ENCODE measurements at regions of chr10 and their contacts with region 1.

Region 1: DNA sequence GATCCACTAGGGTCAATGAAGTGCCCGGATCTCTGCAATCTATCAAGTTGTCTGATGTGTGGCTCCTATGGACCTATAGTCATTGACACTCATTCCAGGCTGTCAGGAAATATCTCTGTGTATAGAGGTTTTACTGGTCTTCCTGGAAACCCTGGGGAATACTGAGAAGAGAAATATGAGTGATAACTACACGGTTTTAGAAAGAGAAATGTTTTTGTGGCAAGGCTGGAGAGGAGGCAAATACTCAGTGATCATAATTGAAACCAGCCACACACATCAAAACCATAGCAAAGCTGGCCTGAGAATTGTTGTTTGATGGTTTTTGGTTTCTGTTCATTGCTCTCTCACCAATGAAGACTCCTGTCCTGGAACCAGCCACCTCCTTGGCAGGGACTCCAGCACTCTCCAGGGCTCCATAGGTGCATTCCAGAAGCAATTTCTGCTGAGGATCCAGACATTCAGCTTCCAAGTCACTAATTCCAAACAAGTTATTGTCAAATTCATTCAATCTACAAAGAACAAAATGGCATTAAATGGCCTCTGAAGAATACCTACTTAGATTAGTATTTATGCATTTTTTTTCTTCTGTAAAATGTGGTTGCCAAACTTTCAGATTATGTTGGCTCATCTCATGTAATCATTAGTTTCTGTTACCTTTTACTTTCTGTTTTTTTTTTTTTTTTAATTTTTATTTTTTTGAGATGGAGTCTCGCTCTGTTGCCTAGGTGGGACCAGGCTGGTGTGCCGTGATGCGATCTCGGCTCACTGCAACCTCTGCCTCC is 108.6 kb upstream of the ABI1 start:
- DNase-seq: peak; percentile 62
- H3K4me3 Mint-ChIP-seq: no peak overlapping the region
- H3K27ac Mint-ChIP-seq: peak overlapping the region; percentile 66
- H3K4me1 Mint-ChIP-seq: peaks cover 26% of the 10 kb centered on the region
- H3K27me3 Mint-ChIP-seq: no peaks in the 10 kb centered on the region

Region 2: DNA sequence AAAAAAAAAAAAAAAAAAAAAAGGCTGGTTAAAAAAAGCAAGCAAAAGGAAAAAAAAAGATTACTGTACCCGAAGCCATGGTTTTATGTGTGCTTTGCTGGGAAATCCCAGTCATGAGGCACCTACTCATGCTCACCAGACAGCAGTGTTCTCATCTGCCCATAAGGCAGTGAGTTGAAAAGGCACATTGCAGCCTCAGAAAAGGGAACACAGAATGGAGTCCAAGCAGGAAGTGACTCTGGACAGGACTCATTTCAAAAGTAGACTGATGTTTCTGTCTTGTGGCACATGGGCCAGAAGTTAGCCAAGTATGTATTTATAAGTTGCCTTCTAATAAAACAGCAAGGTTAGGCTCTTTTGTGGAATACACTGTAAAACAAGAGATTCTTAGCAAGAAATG is 231.6 kb before region 1 on chr10:
- intact Hi-C with region 1: loop called (anchors 5 kb)
- DNase-seq: peak; percentile 83
- H3K4me3 Mint-ChIP-seq: peak overlapping the region; percentile 47
- H3K27ac Mint-ChIP-seq: peak overlapping the region; percentile 98
- H3K4me1 Mint-ChIP-seq: peaks cover 42% of the 10 kb centered on the region
- H3K27me3 Mint-ChIP-seq: no peaks in the 10 kb centered on the region

Region 3: GRCh38 chr10:26903431-26904217 is 65.7 kb before region 1 on chr10:
- intact Hi-C with region 1: no loop called
- DNase-seq: no peak
- H3K4me3 Mint-ChIP-seq: no peak overlapping the region
- H3K27ac Mint-ChIP-seq: no peak overlapping the region
- H3K4me1 Mint-ChIP-seq: no peaks in the 10 kb centered on the region
- H3K27me3 Mint-ChIP-seq: peaks cover 5% of the 10 kb centered on the region

Region 4: GRCh38 chr10:26987851-26988337 is 18.6 kb after region 1 on chr10:
- intact Hi-C with region 1: no loop called
- DNase-seq: no peak
- H3K4me3 Mint-ChIP-seq: no peak overlapping the region
- H3K27ac Mint-ChIP-seq: no peak overlapping the region
- H3K4me1 Mint-ChIP-seq: no peaks in the 10 kb centered on the region
- H3K27me3 Mint-ChIP-seq: no peaks in the 10 kb centered on the region

Region 5: GRCh38 chr10:27019827-27020226 is 50.5 kb after region 1 on chr10:
- intact Hi-C with region 1: loop called (anchors 10 kb)
- DNase-seq: no peak
- H3K4me3 Mint-ChIP-seq: no peak overlapping the region
- H3K27ac Mint-ChIP-seq: no peak overlapping the region
- H3K4me1 Mint-ChIP-seq: peaks cover 9% of the 10 kb centered on the region
- H3K27me3 Mint-ChIP-seq: no peaks in the 10 kb centered on the region

Region 6: DNA sequence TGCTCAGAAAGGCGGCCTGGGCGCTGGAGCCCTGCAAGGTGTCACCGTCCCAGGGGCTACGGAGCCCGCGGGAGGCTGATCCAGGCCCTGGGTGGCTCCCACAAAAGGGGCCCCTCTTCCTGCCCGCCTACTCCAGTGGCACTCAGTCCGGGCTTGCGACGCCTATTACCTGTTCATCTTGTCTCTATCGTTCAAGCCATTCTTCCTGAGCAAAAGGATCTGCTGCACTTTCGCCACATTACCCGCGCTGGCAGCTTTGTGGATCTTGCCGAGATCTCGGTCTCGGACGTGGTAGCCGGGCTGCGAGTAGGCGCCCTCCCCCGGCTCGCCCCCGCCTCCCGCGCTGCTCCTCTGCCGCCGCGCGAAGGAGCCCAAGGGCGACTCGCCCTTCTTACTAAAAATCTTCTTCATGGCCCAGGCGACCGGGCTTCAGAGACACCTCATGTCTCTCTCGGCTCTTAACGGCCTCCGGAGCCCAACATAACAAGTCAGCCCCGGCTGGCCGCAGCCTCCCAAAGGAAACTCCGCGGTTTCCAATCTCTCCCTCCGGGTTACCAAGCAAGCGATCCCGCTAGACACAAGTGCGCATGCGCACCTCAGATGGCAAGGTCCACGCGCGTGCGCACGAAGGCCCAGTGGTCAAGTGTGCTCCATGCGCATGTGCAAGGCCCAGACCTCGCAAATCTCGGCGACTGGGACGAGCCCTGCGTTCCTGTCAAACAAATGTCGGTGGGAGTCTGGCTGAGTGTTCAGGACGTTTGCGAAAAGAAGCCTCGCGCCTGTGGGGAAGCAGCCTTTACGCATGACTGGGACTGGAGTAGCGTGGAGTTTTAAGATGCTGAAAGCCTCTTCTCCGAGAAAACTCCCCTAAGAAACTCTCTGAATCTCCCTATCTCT is 130.8 kb after region 1 on chr10 and contains the start of gene ANKRD26:
- intact Hi-C with region 1: loop called (anchors 2 kb)
- DNase-seq: peak; percentile 99
- H3K4me3 Mint-ChIP-seq: peak within 1 kb of the TSS; percentile 85
- H3K27ac Mint-ChIP-seq: peak within 1 kb of the TSS; percentile 94
- H3K4me1 Mint-ChIP-seq: peaks cover 41% of the 10 kb centered on the region
- H3K27me3 Mint-ChIP-seq: peaks cover 2% of the 10 kb centered on the region
- total RNA-seq, gene ANKRD26: 5.3 and 5.8 TPM in 2 replicates

Measured in activated CD4-positive, alpha-beta T cell treated with anti-CD3 and anti-CD28 coated beads, Interleukin-2, amount 10 ng/mL, durations not matched to agents 24 days and 14 days (primary cell).